B cell (primary cell): ENCODE measurements at regions of chr21 and their contacts with region 1.

Region 1: DNA sequence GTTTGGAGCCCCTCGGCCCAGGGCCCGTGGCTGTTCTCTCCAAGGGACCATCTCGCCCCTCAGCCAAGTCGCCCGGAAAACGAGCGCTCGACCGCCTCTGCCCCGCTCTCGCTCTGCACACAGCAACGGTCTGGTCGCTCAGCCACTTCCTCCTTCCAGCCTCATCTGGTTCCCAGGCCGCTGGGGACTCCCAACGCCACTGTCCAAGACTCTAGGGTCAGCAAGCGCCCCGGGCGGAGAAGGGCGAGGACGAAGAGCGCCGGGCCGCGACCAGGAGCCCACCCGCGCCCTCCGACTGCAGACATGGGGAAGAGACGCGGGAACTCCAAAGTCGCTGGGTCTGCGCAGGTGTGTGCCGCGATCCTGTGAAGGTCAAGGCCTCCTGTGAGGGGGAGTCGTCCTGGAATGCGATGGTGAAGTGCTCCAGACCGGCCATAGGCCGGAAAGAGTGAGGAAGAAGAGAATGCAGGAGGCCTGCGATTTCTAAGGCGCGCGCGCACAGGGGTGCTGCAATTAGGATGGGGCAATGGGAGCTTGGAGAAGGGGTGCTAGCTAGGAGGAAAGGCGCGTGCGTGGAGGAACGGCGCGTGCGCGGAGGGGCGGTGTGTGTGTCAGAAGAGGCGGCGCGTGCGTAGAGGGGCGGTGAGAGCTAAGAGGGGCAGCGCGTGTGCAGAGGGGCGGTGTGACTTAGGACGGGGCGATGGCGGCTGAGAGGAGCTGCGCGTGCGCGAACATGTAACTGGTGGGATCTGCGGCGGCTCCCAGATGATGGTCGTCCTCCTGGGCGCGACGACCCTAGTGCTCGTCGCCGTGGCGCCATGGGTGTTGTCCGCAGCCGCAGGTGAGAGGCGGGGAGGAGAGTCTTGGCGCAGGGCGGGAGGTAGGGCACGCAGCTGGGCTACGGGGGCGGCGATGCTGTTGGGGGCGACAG is at the start of gene IFNAR1:
- DNase-seq: peak; percentile 99
- ATAC-seq: peak; percentile 81
- H3K4me3 ChIP-seq: peak within 1 kb of the TSS; percentile 83 to 98 (median 97)
- H3K4me3 Mint-ChIP-seq: no peak within 1 kb of the TSS
- H3K27ac ChIP-seq: peak within 1 kb of the TSS; percentile 91 to 97
- H3K27ac Mint-ChIP-seq: no peak within 1 kb of the TSS
- H3K4me1 ChIP-seq: peaks cover 28 to 35% of the 10 kb centered on the region in 2 donors
- H3K4me1 Mint-ChIP-seq: peaks cover 30% of the 10 kb centered on the region
- H3K27me3 ChIP-seq: no peaks in the 10 kb centered on the region
- H3K27me3 Mint-ChIP-seq: no peaks in the 10 kb centered on the region
- CTCF ChIP-seq: no peak
- total RNA-seq, gene IFNAR1: 55.7 and 57.7 TPM in 2 replicates

Region 2: DNA sequence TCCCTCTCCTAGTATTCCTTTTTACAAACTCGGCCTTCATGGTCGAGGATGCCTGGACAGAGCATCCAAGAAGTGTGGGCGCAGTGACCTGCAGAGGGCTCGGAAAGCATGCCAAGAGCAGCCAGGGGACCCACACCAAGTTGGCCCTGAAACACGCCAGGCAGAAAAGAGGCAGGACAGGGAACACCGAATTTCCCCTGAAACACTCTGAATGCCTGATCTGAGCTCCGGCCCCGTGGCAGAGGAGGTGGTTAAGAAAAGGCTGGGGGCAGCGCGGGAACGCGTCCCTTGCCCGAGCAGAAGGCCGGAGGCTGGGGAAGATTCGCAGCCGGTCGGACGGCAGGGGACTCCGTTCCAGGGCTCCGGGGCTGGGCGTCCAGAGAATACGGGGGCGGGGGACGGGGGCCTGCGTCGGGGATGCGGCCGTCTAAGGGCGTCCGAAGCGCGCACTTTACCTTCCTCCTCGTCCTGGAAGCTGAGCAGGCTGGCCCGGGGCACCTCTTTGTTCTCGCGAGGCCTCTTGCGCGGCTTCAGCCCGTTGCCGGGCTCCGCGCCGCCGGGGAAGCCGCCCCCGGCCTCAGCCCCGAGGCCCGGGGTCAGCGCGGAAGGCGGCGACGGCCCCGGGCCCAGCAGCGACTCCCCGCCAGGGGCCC is 553.6 kb before region 1 on chr21:
- CTCF ChIA-PET with region 1: no interaction called
- POLR2A ChIA-PET with region 1: interaction called, 3 read pairs
- intact Hi-C with region 1: loop called (anchors 10 kb)
- DNase-seq: no peak
- ATAC-seq: peak; percentile 40
- H3K4me3 ChIP-seq: peak overlapping the region; percentile 65 to 84 (median 78)
- H3K4me3 Mint-ChIP-seq: peak overlapping the region; percentile 96
- H3K27ac ChIP-seq: peak overlapping the region; percentile 48 to 77
- H3K27ac Mint-ChIP-seq: peak overlapping the region; percentile 93
- H3K4me1 ChIP-seq: peaks cover 12 to 19% of the 10 kb centered on the region in 2 donors
- H3K4me1 Mint-ChIP-seq: peaks cover 50% of the 10 kb centered on the region
- H3K27me3 ChIP-seq: no peaks in the 10 kb centered on the region
- H3K27me3 Mint-ChIP-seq: no peaks in the 10 kb centered on the region
- CTCF ChIP-seq: no peak

Region 3: DNA sequence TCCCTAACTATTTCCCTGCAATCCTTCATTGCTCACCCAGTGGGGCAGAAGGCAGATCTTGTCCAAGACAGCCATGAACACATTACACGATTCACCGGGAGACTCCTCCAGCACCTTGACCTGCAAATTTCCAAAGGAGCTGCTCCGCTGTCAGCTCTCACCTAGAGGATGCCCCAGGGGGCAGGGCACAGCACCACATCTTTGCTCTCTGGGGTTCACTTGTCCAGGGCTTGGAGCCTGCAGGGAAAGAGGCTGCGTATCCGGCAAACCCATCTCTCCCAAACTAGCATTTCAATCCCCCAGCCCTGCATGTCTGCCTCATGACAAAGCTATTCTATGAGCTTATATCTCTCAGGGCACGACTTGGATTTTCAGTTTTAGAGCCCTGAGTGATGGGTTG is 333.9 kb before region 1 on chr21:
- CTCF ChIA-PET with region 1: no interaction called
- POLR2A ChIA-PET with region 1: no interaction called
- intact Hi-C with region 1: no loop called
- DNase-seq: no peak
- ATAC-seq: no peak
- H3K4me3 ChIP-seq: no peak overlapping the region
- H3K4me3 Mint-ChIP-seq: no peak overlapping the region
- H3K27ac ChIP-seq: no peak overlapping the region
- H3K27ac Mint-ChIP-seq: no peak overlapping the region
- H3K4me1 ChIP-seq: no peaks in the 10 kb centered on the region
- H3K4me1 Mint-ChIP-seq: no peaks in the 10 kb centered on the region
- H3K27me3 ChIP-seq: peaks cover 0 to 12% (median 1%) of the 10 kb centered on the region in 4 experiments
- H3K27me3 Mint-ChIP-seq: peaks cover 39% of the 10 kb centered on the region
- CTCF ChIP-seq: no peak

Region 4: GRCh38 chr21:33296156-33296555 is 28.4 kb before region 1 on chr21:
- CTCF ChIA-PET with region 1: interaction called, 7 read pairs
- POLR2A ChIA-PET with region 1: interaction called, 5 read pairs
- intact Hi-C with region 1: loop called (anchors 2 kb)
- DNase-seq: peak; percentile 84
- ATAC-seq: peak; percentile 83
- H3K4me3 ChIP-seq: no peak overlapping the region
- H3K4me3 Mint-ChIP-seq: peak overlapping the region; percentile 72
- H3K27ac ChIP-seq: peak overlapping the region; percentile 66 to 84
- H3K27ac Mint-ChIP-seq: peak overlapping the region; percentile 94
- H3K4me1 ChIP-seq: peaks cover 49 to 59% of the 10 kb centered on the region in 2 donors
- H3K4me1 Mint-ChIP-seq: peaks cover 51% of the 10 kb centered on the region
- H3K27me3 ChIP-seq: no peaks in the 10 kb centered on the region
- H3K27me3 Mint-ChIP-seq: no peaks in the 10 kb centered on the region
- CTCF ChIP-seq: no peak

Region 5: GRCh38 chr21:33380483-33380998 is 56.0 kb after region 1 on chr21:
- CTCF ChIA-PET with region 1: no interaction called
- POLR2A ChIA-PET with region 1: interaction called, 10 read pairs
- intact Hi-C with region 1: loop called (anchors 1 kb)
- DNase-seq: peak; percentile 79
- ATAC-seq: peak; percentile 59
- H3K4me3 ChIP-seq: peak overlapping the region in 1 of 5 experiments; percentile 23
- H3K4me3 Mint-ChIP-seq: peak overlapping the region; percentile 85
- H3K27ac ChIP-seq: peak overlapping the region; percentile 96
- H3K27ac Mint-ChIP-seq: peak overlapping the region; percentile 95
- H3K4me1 ChIP-seq: peaks cover 77 to 91% of the 10 kb centered on the region in 2 donors
- H3K4me1 Mint-ChIP-seq: peaks cover 82% of the 10 kb centered on the region
- H3K27me3 ChIP-seq: no peaks in the 10 kb centered on the region
- H3K27me3 Mint-ChIP-seq: no peaks in the 10 kb centered on the region
- CTCF ChIP-seq: no peak

Region 6: DNA sequence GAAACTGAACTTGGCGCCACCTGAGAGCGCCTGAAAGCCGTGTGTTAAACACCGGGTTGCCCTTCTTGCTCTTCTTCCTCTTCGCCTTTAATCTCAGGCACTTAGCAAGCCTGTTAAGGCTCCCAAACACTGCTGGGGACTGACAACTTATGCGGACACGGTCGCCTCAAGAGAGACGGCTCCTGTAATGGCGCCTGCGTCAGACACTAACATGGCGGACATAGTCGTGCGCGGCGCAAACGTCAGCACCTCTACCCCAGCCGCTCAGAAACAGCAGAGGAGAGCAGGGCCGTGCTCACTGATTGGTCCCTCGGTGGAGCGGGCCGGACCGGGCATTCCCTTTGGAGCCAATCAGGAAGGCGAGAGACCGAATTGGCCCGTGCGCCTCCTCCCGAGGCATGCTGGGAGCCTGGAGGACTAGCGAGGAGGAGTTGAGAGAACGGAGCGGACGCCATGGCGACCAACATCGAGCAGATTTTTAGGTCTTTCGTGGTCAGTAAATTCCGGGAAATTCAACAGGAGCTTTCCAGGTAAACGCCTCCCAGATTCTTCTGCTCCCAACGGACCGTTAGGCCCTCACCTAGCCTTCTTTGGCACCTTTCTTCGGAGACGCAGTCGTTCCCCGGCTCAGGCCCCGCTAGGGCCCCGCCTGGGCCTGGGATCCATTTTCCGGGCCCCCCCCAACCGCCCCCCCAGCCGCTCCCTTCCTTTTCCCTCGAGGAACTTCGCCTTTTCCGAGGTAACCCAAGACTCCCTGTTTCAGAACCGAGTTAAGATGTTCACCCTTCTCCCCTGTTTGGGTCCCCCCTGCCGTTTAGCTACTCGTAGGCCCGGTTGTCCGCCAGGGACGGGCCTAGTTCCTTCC is 218.3 kb after region 1 on chr21 and contains the start of gene SON:
- CTCF ChIA-PET with region 1: no interaction called
- POLR2A ChIA-PET with region 1: no interaction called
- intact Hi-C with region 1: loop called (anchors 5 kb)
- DNase-seq: peak; percentile 98
- ATAC-seq: peak; percentile 88
- H3K4me3 ChIP-seq: peak within 1 kb of the TSS; percentile 69 to 99 (median 89)
- H3K4me3 Mint-ChIP-seq: peak within 1 kb of the TSS; percentile 97
- H3K27ac ChIP-seq: peak within 1 kb of the TSS; percentile 96 to 99
- H3K27ac Mint-ChIP-seq: peak within 1 kb of the TSS; percentile 99
- H3K4me1 ChIP-seq: peaks cover 17 to 31% of the 10 kb centered on the region in 2 donors
- H3K4me1 Mint-ChIP-seq: peaks cover 43% of the 10 kb centered on the region
- H3K27me3 ChIP-seq: no peaks in the 10 kb centered on the region
- H3K27me3 Mint-ChIP-seq: no peaks in the 10 kb centered on the region
- CTCF ChIP-seq: no peak
- total RNA-seq, gene SON: 441 and 463 TPM in 2 replicates